PC-3 (cell line): ENCODE measurements at regions of chr13 and their contacts with region 1.

Region 1: GRCh38 chr13:59771272-59771671 is 392.5 kb downstream of the DIAPH3 start:
- DNase-seq: peak; percentile 38
- ATAC-seq: no peak; the same call in 1 of the 2 replicates
- H3K4me3 ChIP-seq: no peak overlapping the region
- H3K27ac ChIP-seq: no peak overlapping the region
- H3K4me1 ChIP-seq: peaks cover 10% of the 10 kb centered on the region
- H3K27me3 ChIP-seq: no peaks in the 10 kb centered on the region
- CTCF ChIP-seq: peak; percentile 69

Region 2: DNA sequence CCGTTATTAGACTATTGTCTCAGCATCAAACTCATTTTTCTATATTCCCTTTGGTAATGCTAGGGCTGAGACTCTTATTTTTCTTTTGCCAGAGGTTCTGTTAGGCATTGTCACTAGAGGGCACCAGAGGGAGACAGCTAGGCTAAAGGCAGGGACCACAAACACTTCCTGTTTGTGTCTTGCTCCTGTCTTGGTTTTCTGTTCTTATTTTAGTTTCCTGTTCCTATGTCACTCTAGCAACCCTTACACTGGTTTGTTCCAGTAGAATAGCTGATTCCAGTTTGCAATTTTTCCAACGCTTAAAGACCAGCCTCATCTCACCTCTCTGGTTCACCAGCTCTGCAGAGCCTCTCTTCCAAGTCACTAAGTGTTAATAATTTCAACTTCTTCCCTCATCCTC is 379.6 kb before region 1 on chr13:
- CTCF ChIA-PET with region 1: no interaction called
- POLR2A ChIA-PET with region 1: no interaction called
- intact Hi-C with region 1: loop called (anchors 5 kb)
- DNase-seq: peak; percentile 62
- ATAC-seq: peak; percentile 74
- H3K4me3 ChIP-seq: no peak overlapping the region
- H3K27ac ChIP-seq: no peak overlapping the region
- H3K4me1 ChIP-seq: no peaks in the 10 kb centered on the region
- H3K27me3 ChIP-seq: no peaks in the 10 kb centered on the region
- CTCF ChIP-seq: peak; percentile 77

Region 3: DNA sequence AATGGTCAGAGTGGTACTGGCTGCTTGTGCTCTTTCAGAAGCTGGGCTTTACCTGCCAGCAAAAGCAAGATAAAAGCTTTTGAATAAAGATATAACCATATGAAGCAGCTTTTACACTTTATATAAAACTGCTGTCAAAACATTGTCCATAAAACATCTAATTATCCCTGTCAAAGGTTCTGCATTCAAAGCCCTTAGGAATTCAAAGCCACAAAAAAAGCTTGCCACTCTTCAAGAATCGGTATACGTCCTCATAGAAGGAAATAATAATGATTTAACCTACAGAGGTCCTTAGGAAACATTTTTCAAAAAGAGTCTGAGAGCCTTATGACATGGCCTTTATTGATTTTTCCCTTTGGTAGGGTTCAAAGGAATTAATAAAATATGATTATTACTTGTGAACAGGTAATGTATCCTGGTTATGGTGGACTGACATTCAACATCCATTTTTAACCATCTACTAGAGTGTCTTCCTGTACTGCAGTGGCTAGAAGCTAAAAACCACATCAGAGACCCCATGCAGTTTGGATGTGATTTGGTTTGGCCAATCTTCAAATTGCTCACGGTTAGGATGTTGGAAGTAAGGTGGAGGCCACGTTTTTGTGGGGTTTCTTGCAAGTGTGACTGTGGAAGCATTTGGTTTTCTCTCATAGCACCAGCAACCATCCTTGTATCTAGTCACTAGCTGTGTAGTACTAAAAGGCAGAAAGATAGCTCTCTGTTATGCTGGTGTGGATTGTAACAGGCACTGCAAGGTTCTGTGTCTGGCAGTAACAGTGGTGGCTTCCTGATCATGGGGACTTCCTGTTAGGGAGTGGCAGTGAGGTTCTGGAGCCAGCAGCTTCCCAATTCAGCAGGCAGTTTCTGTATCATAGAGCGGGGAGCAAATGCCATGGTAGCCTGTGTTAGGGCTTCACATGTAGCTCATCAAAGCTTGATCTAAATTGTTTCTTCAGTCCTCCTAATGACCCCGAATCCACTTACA is 49.1 kb before region 1 on chr13:
- CTCF ChIA-PET with region 1: no interaction called
- POLR2A ChIA-PET with region 1: no interaction called
- intact Hi-C with region 1: no loop called
- DNase-seq: no peak
- ATAC-seq: no peak
- H3K4me3 ChIP-seq: no peak overlapping the region
- H3K27ac ChIP-seq: no peak overlapping the region
- H3K4me1 ChIP-seq: no peaks in the 10 kb centered on the region
- H3K27me3 ChIP-seq: no peaks in the 10 kb centered on the region
- CTCF ChIP-seq: no peak

Region 4: GRCh38 chr13:59906413-59907049 is 135.3 kb after region 1 on chr13:
- CTCF ChIA-PET with region 1: no interaction called
- POLR2A ChIA-PET with region 1: no interaction called
- intact Hi-C with region 1: loop called (anchors 2 kb)
- DNase-seq: peak; percentile 41
- ATAC-seq: peak; percentile 49; the same call in 1 of the 2 replicates
- H3K4me3 ChIP-seq: no peak overlapping the region
- H3K27ac ChIP-seq: no peak overlapping the region
- H3K4me1 ChIP-seq: no peaks in the 10 kb centered on the region
- H3K27me3 ChIP-seq: no peaks in the 10 kb centered on the region
- CTCF ChIP-seq: peak; percentile 72

Region 5: GRCh38 chr13:60335531-60335930 is 564.3 kb after region 1 on chr13:
- CTCF ChIA-PET with region 1: no interaction called
- POLR2A ChIA-PET with region 1: no interaction called
- intact Hi-C with region 1: loop called (anchors 10 kb)
- DNase-seq: peak; percentile 16
- ATAC-seq: no peak
- H3K4me3 ChIP-seq: no peak overlapping the region
- H3K27ac ChIP-seq: no peak overlapping the region
- H3K4me1 ChIP-seq: no peaks in the 10 kb centered on the region
- H3K27me3 ChIP-seq: peaks cover 25% of the 10 kb centered on the region; the same call in 1 of the 2 replicates
- CTCF ChIP-seq: peak; percentile 60